Stomach (tissue), 19 donors: ENCODE measurements at regions of chr2 and their contacts with region 1.

Region 1: DNA sequence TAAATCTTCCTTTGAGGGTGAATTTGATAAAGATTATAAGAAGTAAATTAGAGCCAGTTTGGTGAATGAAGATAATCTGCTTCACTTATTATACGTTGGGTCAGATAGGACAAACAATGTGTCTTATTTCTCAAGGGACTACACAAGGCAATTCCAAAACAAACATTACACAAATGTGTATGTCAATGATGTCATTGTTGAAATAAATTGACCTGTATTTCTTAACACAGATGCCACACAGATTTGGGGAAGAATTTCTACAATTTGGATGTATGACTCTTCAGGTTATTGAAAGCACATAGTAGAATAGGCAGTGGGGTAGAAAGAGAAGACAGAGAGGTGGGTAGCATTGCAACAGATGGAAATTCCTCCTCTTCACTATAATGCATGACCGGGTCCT is 6.9 kb upstream of the CRIM1 start:
- DNase-seq: no peak
- H3K4me3 ChIP-seq: no peak overlapping the region
- H3K27ac ChIP-seq: no peak overlapping the region
- H3K4me1 ChIP-seq: peaks cover 0 to 19% (median 3%) of the 10 kb centered on the region in 4 donors
- H3K27me3 ChIP-seq: no peaks in the 10 kb centered on the region
- CTCF ChIP-seq: no peak
- EP300 ChIP-seq: no peak
- POLR2A ChIP-seq: no peak

Region 2: GRCh38 chr2:36088716-36089328 is 259.9 kb before region 1 on chr2:
- intact Hi-C with region 1: no loop called
- DNase-seq: no peak
- H3K4me3 ChIP-seq: no peak overlapping the region
- H3K27ac ChIP-seq: no peak overlapping the region
- H3K4me1 ChIP-seq: no peaks in the 10 kb centered on the region
- H3K27me3 ChIP-seq: no peaks in the 10 kb centered on the region
- CTCF ChIP-seq: no peak
- EP300 ChIP-seq: no peak
- POLR2A ChIP-seq: no peak

Region 3: GRCh38 chr2:36403675-36404230 is 55.0 kb after region 1 on chr2:
- intact Hi-C with region 1: no loop called
- DNase-seq: no peak
- H3K4me3 ChIP-seq: no peak overlapping the region
- H3K27ac ChIP-seq: no peak overlapping the region
- H3K4me1 ChIP-seq: peaks cover 0 to 21% (median 10%) of the 10 kb centered on the region in 4 donors
- H3K27me3 ChIP-seq: no peaks in the 10 kb centered on the region
- CTCF ChIP-seq: no peak
- EP300 ChIP-seq: no peak
- POLR2A ChIP-seq: no peak

Region 4: DNA sequence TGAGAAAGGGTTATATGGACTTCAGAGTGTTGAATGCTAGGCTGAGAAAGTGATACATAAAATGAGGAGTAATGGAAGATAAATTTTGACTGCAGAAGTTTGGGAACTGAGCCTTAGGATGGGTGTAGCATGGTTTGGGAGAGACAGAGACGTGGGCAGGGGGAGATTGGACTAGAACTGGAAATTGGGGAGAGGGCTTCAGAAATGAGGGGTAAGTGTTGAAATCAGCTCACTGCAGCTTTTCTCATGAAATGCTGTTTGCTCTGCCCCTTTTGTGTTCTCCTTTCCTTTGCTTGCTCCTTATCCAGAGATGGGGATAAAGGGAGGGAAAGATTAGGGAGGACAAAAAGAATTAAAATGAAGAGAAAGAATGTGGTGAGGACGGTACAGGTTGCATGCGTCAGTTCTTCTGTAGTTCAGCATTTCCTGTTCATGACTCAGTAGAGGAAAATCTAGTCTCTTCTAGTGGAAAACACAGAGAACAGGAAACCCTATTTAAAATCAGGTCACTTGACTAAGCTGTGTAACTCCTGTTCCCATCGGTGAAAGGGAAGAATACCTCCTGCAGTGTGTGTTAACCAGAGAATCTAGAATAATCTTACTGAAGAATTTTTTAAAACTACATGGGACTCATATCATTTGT is 112.4 kb after region 1 on chr2:
- intact Hi-C with region 1: no loop called
- DNase-seq: peak in 1 of 2 donors; percentile 55
- H3K4me3 ChIP-seq: no peak overlapping the region
- H3K27ac ChIP-seq: peak overlapping the region; percentile 24 to 62 (median 53)
- H3K4me1 ChIP-seq: peaks cover 6 to 61% (median 28%) of the 10 kb centered on the region in 4 donors
- H3K27me3 ChIP-seq: no peaks in the 10 kb centered on the region
- CTCF ChIP-seq: no peak
- EP300 ChIP-seq: no peak
- POLR2A ChIP-seq: no peak

Region 5: GRCh38 chr2:36667931-36668330 is 319.2 kb after region 1 on chr2:
- intact Hi-C with region 1: loop called (anchors 5 kb)
- DNase-seq: no peak
- H3K4me3 ChIP-seq: no peak overlapping the region
- H3K27ac ChIP-seq: no peak overlapping the region
- H3K4me1 ChIP-seq: peaks cover 0 to 6% (median 3%) of the 10 kb centered on the region in 4 donors
- H3K27me3 ChIP-seq: no peaks in the 10 kb centered on the region
- CTCF ChIP-seq: no peak
- EP300 ChIP-seq: no peak
- POLR2A ChIP-seq: no peak